ENCODE measurements at regions of chr3 and their contacts with region 1.

Region 1: DNA sequence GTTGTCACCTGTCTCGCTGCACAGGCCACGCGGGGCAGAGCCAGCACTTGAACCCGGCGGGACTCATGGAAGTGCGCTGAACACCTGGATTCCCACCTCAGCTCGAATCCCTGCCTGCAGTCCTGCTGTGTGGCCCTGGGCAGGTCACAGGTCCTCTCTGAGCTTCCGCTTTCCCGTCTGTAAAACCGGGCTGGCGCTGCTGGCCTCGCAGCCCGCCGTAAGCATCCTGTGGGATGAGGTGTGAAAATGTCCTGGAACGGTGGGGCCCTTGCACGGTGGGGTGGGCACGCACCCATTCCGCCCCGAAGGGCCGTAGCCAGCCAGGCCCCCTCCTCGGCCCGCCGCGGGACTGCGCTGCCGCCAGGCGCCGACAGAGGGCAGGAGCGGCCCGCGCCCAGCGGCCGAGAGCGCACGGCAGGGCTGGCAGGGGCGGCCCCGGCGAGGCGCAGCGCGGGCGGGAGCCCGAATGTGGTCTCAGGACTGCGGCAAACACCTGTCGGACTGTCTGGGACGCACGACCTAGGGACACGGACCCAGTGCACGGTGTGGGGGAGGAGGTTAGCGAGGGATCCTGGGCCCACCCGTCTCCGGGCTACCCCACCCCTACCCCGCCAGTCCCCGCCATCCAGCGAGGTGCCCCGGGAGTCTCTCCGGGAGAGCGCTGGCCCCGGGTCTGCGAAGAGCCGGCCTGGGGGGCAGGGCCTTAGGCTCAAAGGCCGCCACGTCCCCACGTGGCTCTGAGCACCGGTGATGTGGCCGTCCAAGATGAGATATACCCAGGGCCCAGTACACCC is 40.4 kb downstream of the DNAJB8 start:
- DNase-seq: peak; percentile 75
- ATAC-seq: peak; percentile 91
- H3K4me3 Mint-ChIP-seq: no peak overlapping the region
- H3K27ac Mint-ChIP-seq: no peak overlapping the region
- H3K4me1 Mint-ChIP-seq: no peaks in the 10 kb centered on the region
- H3K27me3 Mint-ChIP-seq: peaks cover 18% of the 10 kb centered on the region

Region 2: DNA sequence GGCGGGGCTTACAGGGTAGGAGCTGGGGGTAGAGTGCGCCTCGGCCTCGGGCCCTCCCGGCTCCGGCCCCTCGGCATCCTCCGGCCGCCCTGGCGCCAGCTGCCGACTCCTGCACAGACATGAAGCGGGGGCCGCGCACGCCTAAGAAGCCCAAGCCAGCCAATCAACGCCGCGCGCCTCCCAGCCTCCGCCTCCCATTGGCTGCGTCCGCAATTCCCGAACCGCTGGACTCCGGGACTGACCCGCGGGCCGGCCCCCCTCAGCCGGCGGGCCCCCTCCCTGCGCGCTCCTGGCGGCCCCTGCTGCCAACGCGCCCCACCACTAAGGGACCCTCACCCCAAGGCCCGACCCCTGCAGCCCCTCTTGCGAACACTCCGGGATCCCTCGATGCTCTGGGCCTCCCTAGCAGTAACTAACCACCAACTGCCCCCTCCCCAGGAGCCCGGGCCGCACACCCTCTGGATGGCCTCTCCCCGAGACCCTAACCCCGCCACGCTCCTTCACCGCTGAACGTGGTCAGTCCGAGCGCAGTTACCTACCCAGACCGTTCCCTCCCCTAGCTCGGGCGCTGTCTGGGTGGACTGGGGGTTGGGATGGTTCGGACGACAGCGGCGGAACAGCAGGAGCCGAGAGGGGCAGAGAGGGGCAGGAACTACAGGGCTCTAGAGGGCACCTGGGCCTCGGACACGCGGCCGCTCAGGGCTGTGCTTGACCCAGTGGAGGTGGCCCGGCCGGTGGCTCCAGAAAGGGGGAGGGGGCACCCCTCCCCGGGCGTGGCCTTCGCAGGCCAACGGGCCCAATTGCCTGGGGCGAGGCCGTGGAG is 61.7 kb after region 1 on chr3:
- CTCF ChIA-PET with region 1: interaction called, 5 read pairs
- POLR2A ChIA-PET with region 1: no interaction called
- intact Hi-C with region 1: loop called in 1 of 2 experiments (anchors 2 kb)
- DNase-seq: peak; percentile 64
- ATAC-seq: peak; percentile 49
- H3K4me3 Mint-ChIP-seq: peak overlapping the region; percentile 70
- H3K27ac Mint-ChIP-seq: no peak overlapping the region
- H3K4me1 Mint-ChIP-seq: peaks cover 31% of the 10 kb centered on the region
- H3K27me3 Mint-ChIP-seq: peaks cover 63% of the 10 kb centered on the region

Region 3: DNA sequence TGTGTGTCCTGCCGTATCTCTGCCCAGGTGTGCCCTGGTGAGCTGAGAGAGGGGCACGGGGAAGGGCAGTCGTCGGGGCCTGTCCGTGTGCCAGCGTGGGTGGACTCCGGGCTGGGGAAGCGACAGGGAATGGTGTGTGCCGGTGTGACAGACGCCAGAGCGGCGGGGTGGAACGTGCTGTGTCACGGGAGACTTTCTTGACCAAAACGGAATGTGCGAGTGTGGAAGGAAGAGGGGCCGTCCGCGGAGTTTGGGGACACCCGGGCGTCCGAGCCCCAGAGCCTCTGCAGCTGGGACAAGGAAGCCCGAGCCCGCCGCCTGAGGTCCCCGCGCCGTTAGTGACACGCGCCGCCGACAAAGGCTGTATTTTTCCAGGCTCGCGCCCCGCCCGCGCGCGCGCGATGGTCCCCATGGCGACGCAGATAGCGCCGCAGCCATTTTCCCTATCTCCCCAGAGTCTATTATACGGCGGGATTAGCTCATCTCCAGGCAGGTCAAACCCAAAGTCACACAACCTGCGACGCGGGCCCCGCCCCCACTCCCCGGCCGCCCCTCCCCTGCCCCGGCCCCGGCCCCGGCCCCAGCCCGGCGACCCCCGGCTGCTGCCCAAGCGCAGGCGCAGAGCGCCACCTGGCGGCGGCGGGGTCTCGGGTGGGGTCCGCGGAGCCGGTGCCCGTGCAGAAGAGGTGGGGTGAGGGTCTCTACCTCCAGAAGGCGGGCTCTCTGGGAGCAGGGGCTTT is 71.2 kb after region 1 on chr3:
- CTCF ChIA-PET with region 1: interaction called, 18 read pairs
- POLR2A ChIA-PET with region 1: no interaction called
- intact Hi-C with region 1: loop called (anchors 1 kb)
- DNase-seq: peak; percentile 85
- ATAC-seq: peak; percentile 78
- H3K4me3 Mint-ChIP-seq: peak overlapping the region; percentile 61
- H3K27ac Mint-ChIP-seq: no peak overlapping the region
- H3K4me1 Mint-ChIP-seq: no peaks in the 10 kb centered on the region
- H3K27me3 Mint-ChIP-seq: peaks cover 42% of the 10 kb centered on the region

Region 4: DNA sequence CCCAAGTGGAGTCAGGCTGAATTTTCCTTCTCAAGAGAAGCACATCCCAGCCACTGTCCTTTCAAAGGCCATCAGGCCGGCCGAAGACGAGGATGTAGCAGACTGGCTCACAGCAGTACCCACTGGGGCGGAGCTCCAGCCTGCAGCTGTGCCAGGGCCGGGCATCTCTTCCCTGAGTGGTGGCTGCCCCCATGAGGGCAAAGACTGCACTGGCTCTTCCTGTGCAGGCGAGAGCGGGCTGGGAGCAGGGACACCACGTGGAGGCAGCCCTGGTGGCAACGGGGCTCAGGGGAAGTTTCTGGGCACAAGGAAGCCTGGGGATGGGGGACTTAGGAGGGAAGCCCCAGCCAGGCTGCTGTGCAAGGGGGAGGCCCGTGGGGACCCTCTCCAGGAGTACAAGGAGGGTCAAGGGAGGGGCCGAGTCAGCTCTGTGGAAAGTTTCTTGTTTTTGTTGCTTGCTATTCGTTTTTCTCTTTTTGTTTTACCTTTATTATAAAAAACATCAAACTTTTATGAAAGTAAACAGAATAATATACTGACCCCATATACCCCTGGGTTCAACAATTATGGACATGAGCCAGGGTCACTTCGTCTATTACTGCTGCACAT is 158.2 kb after region 1 on chr3:
- CTCF ChIA-PET with region 1: interaction called, 25 read pairs
- POLR2A ChIA-PET with region 1: no interaction called
- intact Hi-C with region 1: loop called in 1 of 2 experiments (anchors 1 kb)
- DNase-seq: peak; percentile 81
- ATAC-seq: peak; percentile 99
- H3K4me3 Mint-ChIP-seq: no peak overlapping the region
- H3K27ac Mint-ChIP-seq: no peak overlapping the region
- H3K4me1 Mint-ChIP-seq: peaks cover 6% of the 10 kb centered on the region
- H3K27me3 Mint-ChIP-seq: peaks cover 11% of the 10 kb centered on the region

Region 5: GRCh38 chr3:128607710-128608048 is 181.4 kb after region 1 on chr3:
- CTCF ChIA-PET with region 1: interaction called, 26 read pairs
- POLR2A ChIA-PET with region 1: no interaction called
- intact Hi-C with region 1: loop called (anchors 1 kb)
- DNase-seq: no peak
- ATAC-seq: no peak
- H3K4me3 Mint-ChIP-seq: no peak overlapping the region
- H3K27ac Mint-ChIP-seq: no peak overlapping the region
- H3K4me1 Mint-ChIP-seq: no peaks in the 10 kb centered on the region
- H3K27me3 Mint-ChIP-seq: no peaks in the 10 kb centered on the region